ENCODE measurements at regions of chr10 and their contacts with region 1.

Region 1: GRCh38 chr10:78053211-78053868 is 19.7 kb downstream of the RPS24 start:
- DNase-seq: no peak
- H3K4me3 ChIP-seq: no peak overlapping the region
- H3K27ac ChIP-seq: no peak overlapping the region
- H3K4me1 ChIP-seq: no peaks in the 10 kb centered on the region
- H3K27me3 ChIP-seq: no peaks in the 10 kb centered on the region
- CTCF ChIP-seq: no peak
- EP300 ChIP-seq: no peak
- POLR2A ChIP-seq: no peak

Region 2: GRCh38 chr10:78657163-78657861 is 604.0 kb after region 1 on chr10:
- in situ Hi-C with region 1: loop called in 1 of 4 experiments (anchors 25 kb)
- intact Hi-C with region 1: no loop called
- DNase-seq: peak; percentile 86
- H3K4me3 ChIP-seq: no peak overlapping the region
- H3K27ac ChIP-seq: peak overlapping the region; percentile 28 to 44 (median 40)
- H3K4me1 ChIP-seq: peaks cover 0 to 8% (median 2%) of the 10 kb centered on the region in 4 donors
- H3K27me3 ChIP-seq: no peaks in the 10 kb centered on the region
- CTCF ChIP-seq: peak; percentile 58 to 78 (median 73)
- EP300 ChIP-seq: no peak
- POLR2A ChIP-seq: no peak

Measured in transverse colon (tissue), 4 donors.